ENCODE measurements at regions of chr5 and their contacts with region 1.

Region 1: DNA sequence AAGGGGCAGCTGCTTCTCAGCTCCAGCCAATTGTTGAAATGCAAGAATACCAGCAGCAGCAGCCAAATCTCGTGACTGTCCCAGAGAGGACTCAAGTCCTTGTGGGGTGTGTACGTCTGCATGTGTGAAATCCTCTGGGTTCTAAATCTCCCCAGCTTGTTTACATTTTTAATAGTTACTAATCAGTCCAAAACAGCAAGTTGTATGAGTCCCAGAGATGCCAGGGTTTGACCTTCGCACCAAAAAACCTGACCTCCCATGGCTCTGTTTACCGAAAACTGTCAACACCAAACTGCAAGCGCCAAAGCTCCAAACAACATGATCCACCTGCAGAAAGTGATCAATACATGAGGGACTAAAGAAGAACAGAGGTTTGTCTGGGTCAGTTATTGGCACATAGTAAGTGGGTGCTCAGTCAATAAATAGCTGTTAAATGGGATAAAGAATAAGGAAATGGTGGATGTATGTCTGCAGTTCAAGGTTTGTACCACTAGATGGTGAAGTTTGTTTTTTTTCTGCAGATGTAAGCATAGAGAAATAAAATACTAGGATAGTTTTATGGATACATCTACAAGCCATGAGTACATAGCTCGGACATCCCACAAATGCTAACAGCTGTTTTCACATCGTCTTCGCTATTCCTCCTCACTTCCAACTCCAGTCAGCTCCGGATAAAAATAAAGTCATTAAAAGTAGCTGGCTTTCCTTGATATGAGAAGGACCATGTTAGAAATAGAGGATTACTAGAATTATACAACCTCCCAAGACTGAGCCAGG is 85.3 kb upstream of the ADRB2 start:
- DNase-seq: peak; percentile 58
- H3K4me3 ChIP-seq: no peak overlapping the region
- H3K27ac ChIP-seq: no peak overlapping the region
- H3K4me1 ChIP-seq: no peaks in the 10 kb centered on the region
- H3K27me3 ChIP-seq: no peaks in the 10 kb centered on the region
- CTCF ChIP-seq: peak; percentile 66 to 77

Region 2: GRCh38 chr5:148697180-148697808 is 43.9 kb before region 1 on chr5:
- CTCF ChIA-PET with region 1: no interaction called
- dilution Hi-C with region 1: no loop called
- in situ Hi-C with region 1: no loop called
- intact Hi-C with region 1: no loop called
- DNase-seq: peak; percentile 23
- H3K4me3 ChIP-seq: no peak overlapping the region
- H3K27ac ChIP-seq: no peak overlapping the region
- H3K4me1 ChIP-seq: no peaks in the 10 kb centered on the region
- H3K27me3 ChIP-seq: no peaks in the 10 kb centered on the region
- CTCF ChIP-seq: no peak

Region 3: DNA sequence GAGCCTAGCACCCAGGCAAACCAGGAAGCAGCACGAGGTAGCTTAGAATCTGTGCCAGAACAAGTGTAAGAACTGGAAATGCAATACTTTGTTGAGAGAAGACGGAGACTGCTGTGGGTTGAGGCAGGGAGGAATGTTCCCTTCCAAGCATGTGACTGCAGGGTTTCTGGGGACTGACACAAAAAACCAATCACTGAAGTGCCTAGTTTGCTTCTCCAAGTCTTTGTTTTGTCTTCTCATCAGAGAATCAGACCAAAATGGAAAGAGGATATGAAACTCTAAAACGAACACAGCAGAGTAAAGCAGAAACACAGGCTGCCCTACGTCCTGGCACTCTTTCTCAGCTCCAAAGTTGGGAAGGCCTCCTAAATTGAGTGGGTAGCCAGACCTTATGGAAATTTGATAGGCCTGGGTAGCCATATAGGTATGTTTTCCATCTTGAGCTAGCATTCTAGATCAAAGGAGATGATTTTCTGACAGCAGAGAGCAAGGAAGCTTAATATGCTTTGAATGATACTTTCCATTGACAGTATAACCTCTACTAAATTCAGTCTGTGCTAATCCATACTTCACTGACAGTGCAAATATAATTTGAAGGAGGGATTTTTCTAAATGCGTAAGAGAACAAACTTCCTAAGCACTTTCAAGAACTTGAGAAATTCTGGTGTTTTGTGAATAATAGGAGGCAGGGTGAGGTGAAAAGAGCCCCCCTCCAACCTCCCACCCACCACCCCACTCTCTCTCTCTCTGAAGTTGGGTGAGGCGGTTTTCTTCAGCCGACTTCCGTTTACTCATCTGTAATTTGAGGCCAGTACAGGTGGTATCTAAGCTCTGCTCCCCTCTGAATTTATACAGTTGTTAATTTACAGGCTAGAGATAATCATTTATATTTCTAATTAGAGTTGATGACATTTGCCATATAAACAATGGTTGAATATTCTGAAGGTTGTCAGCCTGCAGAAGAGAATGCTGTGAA is 90.7 kb after region 1 on chr5:
- CTCF ChIA-PET with region 1: no interaction called
- dilution Hi-C with region 1: loop called (anchors 5 kb)
- in situ Hi-C with region 1: no loop called
- intact Hi-C with region 1: no loop called
- DNase-seq: no peak
- H3K4me3 ChIP-seq: peak overlapping the region in 1 of 3 experiments; percentile 81
- H3K27ac ChIP-seq: no peak overlapping the region
- H3K4me1 ChIP-seq: peaks cover 27% of the 10 kb centered on the region
- H3K27me3 ChIP-seq: no peaks in the 10 kb centered on the region
- CTCF ChIP-seq: no peak

Region 4: GRCh38 chr5:149035372-149035790 is 294.2 kb after region 1 on chr5:
- CTCF ChIA-PET with region 1: interaction called, 5 read pairs
- dilution Hi-C with region 1: no loop called
- in situ Hi-C with region 1: loop called (anchors 10 kb)
- intact Hi-C with region 1: loop called (anchors 1 kb)
- DNase-seq: peak; percentile 61
- H3K4me3 ChIP-seq: no peak overlapping the region
- H3K27ac ChIP-seq: no peak overlapping the region
- H3K4me1 ChIP-seq: peaks cover 25% of the 10 kb centered on the region
- H3K27me3 ChIP-seq: no peaks in the 10 kb centered on the region
- CTCF ChIP-seq: peak; percentile 88 to 90

Region 5: DNA sequence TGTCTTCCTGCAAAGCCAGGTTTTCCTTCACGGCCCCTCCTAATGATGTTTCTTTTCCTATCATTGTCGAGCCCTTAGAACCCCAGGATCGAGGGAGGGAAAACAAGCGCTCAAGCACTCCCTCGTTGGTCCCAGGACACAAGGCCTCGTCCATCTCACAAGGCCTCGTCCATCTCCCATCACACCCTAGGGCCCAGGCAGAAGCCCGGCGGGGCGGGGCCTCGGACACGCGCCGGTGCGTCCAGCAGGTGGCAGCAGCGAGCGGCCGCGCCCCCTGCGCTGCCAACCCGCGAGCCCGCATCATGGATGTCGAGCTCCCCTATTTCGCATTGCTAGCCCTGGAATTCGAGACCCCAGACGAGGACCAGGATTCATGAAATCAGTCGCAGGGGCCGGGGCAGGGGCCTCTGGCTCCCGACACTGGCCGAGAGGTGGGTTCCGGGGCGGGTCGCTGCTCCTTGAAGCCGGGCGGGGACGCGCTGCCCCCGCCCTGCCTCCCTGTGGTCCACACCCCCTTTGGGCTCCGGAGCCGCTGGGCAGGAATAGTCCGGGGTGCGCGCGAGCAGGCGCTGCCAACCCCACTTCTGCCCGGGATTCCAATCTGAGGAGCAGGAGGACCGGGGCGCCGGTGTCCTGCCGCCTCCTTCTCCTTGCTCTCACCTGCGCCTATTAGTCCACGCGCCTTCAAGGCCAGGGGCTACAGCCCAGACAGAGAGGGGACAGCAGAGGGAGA is 400.2 kb after region 1 on chr5 and contains the start of gene ABLIM3:
- CTCF ChIA-PET with region 1: no interaction called
- dilution Hi-C with region 1: no loop called
- in situ Hi-C with region 1: no loop called
- intact Hi-C with region 1: no loop called
- DNase-seq: peak; percentile 74
- H3K4me3 ChIP-seq: peak within 1 kb of the TSS; percentile 73 to 84 (median 82)
- H3K27ac ChIP-seq: peak within 1 kb of the TSS; percentile 43
- H3K4me1 ChIP-seq: peaks cover 12% of the 10 kb centered on the region
- H3K27me3 ChIP-seq: no peaks in the 10 kb centered on the region
- CTCF ChIP-seq: peak; percentile 75 to 85
- total RNA-seq, gene ABLIM3: 17.3 to 38.6 TPM